ENCODE measurements at regions of chr5 and their contacts with region 1.

Region 1: GRCh38 chr5:134041570-134042411 is 37.0 kb upstream of the VDAC1 start:
- DNase-seq: peak in 1 of 2 experiments; percentile 74
- H3K4me3 ChIP-seq: no peak overlapping the region
- H3K27ac ChIP-seq: peak overlapping the region; percentile 47
- H3K4me1 ChIP-seq: peaks cover 45% of the 10 kb centered on the region
- H3K27me3 ChIP-seq: no peaks in the 10 kb centered on the region
- CTCF ChIP-seq: no peak

Region 2: DNA sequence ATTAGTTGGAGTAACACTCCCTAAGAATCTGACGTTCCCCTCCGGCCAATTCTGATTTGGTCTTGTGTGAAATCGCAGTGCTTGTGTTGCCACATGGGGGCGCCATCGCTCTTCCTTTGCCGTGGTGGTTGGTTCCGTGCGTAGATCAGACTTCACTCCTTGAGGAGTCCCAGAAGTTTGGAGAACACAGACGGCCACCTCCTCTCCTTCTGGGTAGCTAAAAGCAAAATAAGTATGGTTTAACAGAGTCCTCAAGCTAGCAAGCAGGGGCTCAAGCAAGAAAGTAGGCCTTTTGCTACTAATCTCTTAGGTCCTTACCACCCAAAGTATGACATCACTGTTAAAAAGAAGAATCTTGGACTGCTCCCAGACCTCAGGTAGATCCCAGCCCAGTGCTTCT is 930.5 kb before region 1 on chr5:
- CTCF ChIA-PET with region 1: no interaction called
- POLR2A ChIA-PET with region 1: no interaction called
- intact Hi-C with region 1: loop called (anchors 5 kb)
- DNase-seq: peak; percentile 74 to 75
- H3K4me3 ChIP-seq: no peak overlapping the region
- H3K27ac ChIP-seq: no peak overlapping the region
- H3K4me1 ChIP-seq: no peaks in the 10 kb centered on the region; the same call in 1 of the 2 replicates
- H3K27me3 ChIP-seq: no peaks in the 10 kb centered on the region
- CTCF ChIP-seq: peak; percentile 96

Region 3: GRCh38 chr5:133364936-133365707 is 676.7 kb before region 1 on chr5:
- CTCF ChIA-PET with region 1: no interaction called
- POLR2A ChIA-PET with region 1: no interaction called
- intact Hi-C with region 1: loop called (anchors 5 kb)
- DNase-seq: no peak
- H3K4me3 ChIP-seq: no peak overlapping the region
- H3K27ac ChIP-seq: no peak overlapping the region
- H3K4me1 ChIP-seq: peaks cover 10% of the 10 kb centered on the region
- H3K27me3 ChIP-seq: no peaks in the 10 kb centered on the region
- CTCF ChIP-seq: peak; percentile 35; the same call in 1 of the 2 replicates

Region 4: DNA sequence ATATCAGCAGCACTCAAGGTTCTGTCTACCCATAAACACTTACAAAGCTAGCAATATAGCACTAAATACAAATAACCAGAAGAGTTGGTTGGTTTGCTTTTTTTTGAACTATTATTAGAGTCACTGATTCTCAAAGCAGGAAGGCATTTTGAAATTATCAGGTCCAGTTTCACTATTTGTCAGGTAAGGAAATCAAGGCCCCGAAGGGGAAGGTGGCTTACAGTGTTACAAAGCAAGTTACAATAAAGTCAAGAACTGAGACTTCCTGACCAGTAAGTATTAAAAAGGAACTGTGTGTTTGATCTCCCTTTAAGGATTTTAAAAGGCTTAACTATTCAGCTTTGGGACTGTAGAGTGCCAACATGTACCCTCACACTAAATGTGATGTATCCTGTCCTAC is 84.2 kb before region 1 on chr5:
- CTCF ChIA-PET with region 1: no interaction called
- POLR2A ChIA-PET with region 1: no interaction called
- intact Hi-C with region 1: no loop called
- DNase-seq: no peak
- H3K4me3 ChIP-seq: no peak overlapping the region
- H3K27ac ChIP-seq: peak overlapping the region; percentile 37; the same call in 1 of the 2 replicates
- H3K4me1 ChIP-seq: no peaks in the 10 kb centered on the region
- H3K27me3 ChIP-seq: no peaks in the 10 kb centered on the region
- CTCF ChIP-seq: no peak

Region 5: GRCh38 chr5:134063188-134063820 is 21.5 kb after region 1 on chr5:
- CTCF ChIA-PET with region 1: interaction called, 4 read pairs
- POLR2A ChIA-PET with region 1: interaction called, 10 read pairs
- intact Hi-C with region 1: no loop called
- DNase-seq: no peak
- H3K4me3 ChIP-seq: no peak overlapping the region
- H3K27ac ChIP-seq: no peak overlapping the region
- H3K4me1 ChIP-seq: peaks cover 20% of the 10 kb centered on the region
- H3K27me3 ChIP-seq: no peaks in the 10 kb centered on the region
- CTCF ChIP-seq: no peak

Region 6: GRCh38 chr5:134140530-134141201 is 98.9 kb after region 1 on chr5:
- CTCF ChIA-PET with region 1: interaction called, 10 read pairs
- POLR2A ChIA-PET with region 1: no interaction called
- intact Hi-C with region 1: loop called (anchors 1 kb)
- DNase-seq: peak; percentile 72 to 73
- H3K4me3 ChIP-seq: no peak overlapping the region
- H3K27ac ChIP-seq: no peak overlapping the region
- H3K4me1 ChIP-seq: peaks cover 21% of the 10 kb centered on the region
- H3K27me3 ChIP-seq: no peaks in the 10 kb centered on the region
- CTCF ChIP-seq: peak; percentile 83

Region 7: GRCh38 chr5:134145779-134146581 is 104.2 kb after region 1 on chr5:
- CTCF ChIA-PET with region 1: interaction called, 10 read pairs
- POLR2A ChIA-PET with region 1: no interaction called
- intact Hi-C with region 1: loop called (anchors 1 kb)
- DNase-seq: peak; percentile 49 to 71
- H3K4me3 ChIP-seq: no peak overlapping the region
- H3K27ac ChIP-seq: no peak overlapping the region
- H3K4me1 ChIP-seq: peaks cover 17% of the 10 kb centered on the region
- H3K27me3 ChIP-seq: no peaks in the 10 kb centered on the region
- CTCF ChIP-seq: peak; percentile 96

Region 8: DNA sequence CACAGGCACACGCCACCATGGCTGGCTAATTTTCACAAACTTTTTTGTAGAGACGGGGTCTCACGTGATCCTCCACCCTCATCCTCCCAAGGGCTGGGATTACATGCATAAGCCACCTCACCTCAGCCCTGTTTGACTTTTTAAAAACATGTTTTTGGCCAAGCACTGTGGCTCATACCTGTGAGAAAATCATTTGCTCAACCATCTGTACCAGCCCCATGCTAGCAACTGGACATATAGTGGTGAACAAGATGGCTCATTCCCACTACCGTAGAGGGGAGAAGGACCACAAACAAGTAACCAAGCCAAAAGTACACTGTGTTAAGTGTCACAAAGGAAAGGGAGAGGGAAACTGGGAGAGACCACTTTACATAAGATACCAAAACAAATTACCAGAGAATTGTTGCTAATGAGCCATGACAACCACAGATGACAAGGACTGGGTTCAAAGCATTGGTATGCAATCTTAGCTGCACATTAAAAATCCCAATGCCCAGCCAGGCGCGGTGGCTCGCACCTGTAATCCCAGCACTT is 164.9 kb after region 1 on chr5:
- CTCF ChIA-PET with region 1: no interaction called
- POLR2A ChIA-PET with region 1: no interaction called
- intact Hi-C with region 1: no loop called
- DNase-seq: no peak
- H3K4me3 ChIP-seq: no peak overlapping the region
- H3K27ac ChIP-seq: no peak overlapping the region
- H3K4me1 ChIP-seq: no peaks in the 10 kb centered on the region
- H3K27me3 ChIP-seq: no peaks in the 10 kb centered on the region
- CTCF ChIP-seq: no peak

Region 9: DNA sequence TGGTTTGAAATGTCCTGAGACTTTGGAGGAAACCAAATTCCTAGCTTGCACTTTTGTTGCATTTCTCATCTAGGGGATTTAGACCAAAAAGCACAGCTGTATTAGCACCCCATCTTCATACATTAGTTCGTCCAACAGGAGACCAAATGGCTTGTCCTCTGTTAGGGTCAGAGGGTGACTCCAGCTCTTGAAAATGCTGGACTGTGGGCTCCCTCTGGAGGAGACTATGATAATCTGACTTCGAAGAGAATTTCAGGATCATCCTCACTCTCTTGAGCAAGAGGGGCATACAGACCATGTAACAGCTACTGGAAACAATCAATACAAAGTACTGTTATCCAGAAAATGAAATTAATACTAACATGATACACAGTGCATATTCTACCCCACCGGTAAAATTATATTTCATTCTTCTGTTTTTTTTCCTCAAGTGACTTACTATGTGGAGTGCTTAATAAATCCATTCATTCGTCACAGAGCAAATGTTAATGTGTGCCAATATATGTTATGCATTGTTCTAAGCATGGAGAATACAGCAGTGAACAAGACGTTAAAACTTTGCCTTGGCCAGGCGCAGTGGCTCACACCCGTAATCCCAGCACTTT is 247.8 kb after region 1 on chr5:
- CTCF ChIA-PET with region 1: no interaction called
- POLR2A ChIA-PET with region 1: interaction called, 3 read pairs
- intact Hi-C with region 1: loop called (anchors 1 kb)
- DNase-seq: peak; percentile 48 to 74
- H3K4me3 ChIP-seq: no peak overlapping the region
- H3K27ac ChIP-seq: no peak overlapping the region
- H3K4me1 ChIP-seq: no peaks in the 10 kb centered on the region
- H3K27me3 ChIP-seq: no peaks in the 10 kb centered on the region
- CTCF ChIP-seq: peak; percentile 91

Measured in PC-9 (cell line).